ENCODE measurements at regions of chr17 and their contacts with region 1.

Region 1: DNA sequence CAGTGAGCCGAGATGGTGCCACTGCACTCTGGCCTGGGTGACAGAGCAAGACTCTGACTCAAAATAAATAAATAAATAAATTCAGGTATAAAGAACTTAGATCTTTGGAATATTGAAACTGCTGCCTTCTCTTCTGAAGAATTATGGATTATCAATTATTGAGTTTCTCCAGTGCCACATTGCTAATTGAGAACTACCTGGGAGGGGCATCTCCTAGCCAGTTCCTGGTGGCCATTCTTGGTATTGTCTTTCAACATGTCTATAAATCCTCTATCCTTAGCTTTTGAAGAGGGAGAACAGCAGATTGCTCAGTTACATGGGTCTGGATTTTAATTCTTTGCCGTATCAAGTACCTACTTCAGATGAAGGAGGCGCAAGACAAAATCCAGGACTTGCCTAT is 29.2 kb downstream of the CALCOCO2 start:
- DNase-seq: no peak
- H3K4me3 Mint-ChIP-seq: no peak overlapping the region
- H3K27ac Mint-ChIP-seq: no peak overlapping the region
- H3K4me1 Mint-ChIP-seq: no peaks in the 10 kb centered on the region
- H3K27me3 Mint-ChIP-seq: no peaks in the 10 kb centered on the region
- CTCF ChIP-seq: no peak

Region 2: GRCh38 chr17:49820773-49821172 is 960.7 kb after region 1 on chr17:
- CTCF ChIA-PET with region 1: interaction called, 14 read pairs
- intact Hi-C with region 1: no loop called
- DNase-seq: no peak
- H3K4me3 Mint-ChIP-seq: no peak overlapping the region
- H3K27ac Mint-ChIP-seq: peak overlapping the region; percentile 36
- H3K4me1 Mint-ChIP-seq: peaks cover 28% of the 10 kb centered on the region
- H3K27me3 Mint-ChIP-seq: no peaks in the 10 kb centered on the region
- CTCF ChIP-seq: no peak